SK-N-SH (cell line): ENCODE measurements at regions of chr3 and their contacts with region 1.

Region 1: GRCh38 chr3:155352900-155353490 is 59.5 kb upstream of the STRIT1 start:
- DNase-seq: peak; percentile 31
- H3K4me3 ChIP-seq: no peak overlapping the region
- H3K27ac ChIP-seq: no peak overlapping the region; a peak in 1 of 4 replicates
- H3K4me1 ChIP-seq: no peaks in the 10 kb centered on the region; a peak in 1 of 4 replicates
- H3K27me3 ChIP-seq: no peaks in the 10 kb centered on the region
- CTCF ChIP-seq: peak; percentile 71
- EP300 ChIP-seq: no peak
- RAD21 ChIP-seq: peak; percentile 76

Region 2: GRCh38 chr3:154981664-154982063 is 371.3 kb before region 1 on chr3:
- CTCF ChIA-PET with region 1: no interaction called
- POLR2A ChIA-PET with region 1: no interaction called
- DNase-seq: no peak
- H3K4me3 ChIP-seq: no peak overlapping the region
- H3K27ac ChIP-seq: no peak overlapping the region
- H3K4me1 ChIP-seq: no peaks in the 10 kb centered on the region
- H3K27me3 ChIP-seq: no peaks in the 10 kb centered on the region
- CTCF ChIP-seq: no peak
- EP300 ChIP-seq: no peak
- RAD21 ChIP-seq: no peak

Region 3: DNA sequence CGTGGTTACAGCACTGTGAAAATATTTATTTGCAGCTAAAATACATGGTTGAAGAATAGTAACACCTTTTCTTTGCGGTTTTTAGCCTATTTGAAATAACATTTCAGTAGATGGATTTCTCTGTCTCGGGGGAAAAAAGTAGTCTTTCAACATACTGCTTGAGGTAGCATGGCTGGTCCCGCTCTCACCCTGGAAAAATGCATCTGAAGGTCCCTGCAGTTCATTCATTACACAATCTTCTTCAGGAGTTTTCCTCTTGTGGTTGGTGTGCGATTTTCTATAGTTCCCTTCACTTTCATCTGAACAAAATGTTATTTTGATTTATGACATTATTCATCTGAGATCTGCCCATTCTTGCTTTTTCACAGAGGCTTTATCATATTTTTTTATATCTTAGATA is 135.4 kb before region 1 on chr3:
- CTCF ChIA-PET with region 1: no interaction called
- POLR2A ChIA-PET with region 1: no interaction called
- DNase-seq: no peak
- H3K4me3 ChIP-seq: no peak overlapping the region
- H3K27ac ChIP-seq: no peak overlapping the region
- H3K4me1 ChIP-seq: no peaks in the 10 kb centered on the region
- H3K27me3 ChIP-seq: no peaks in the 10 kb centered on the region
- CTCF ChIP-seq: no peak
- EP300 ChIP-seq: no peak
- RAD21 ChIP-seq: no peak

Region 4: GRCh38 chr3:155270485-155271342 is 82.3 kb before region 1 on chr3:
- CTCF ChIA-PET with region 1: no interaction called
- POLR2A ChIA-PET with region 1: no interaction called
- DNase-seq: no peak
- H3K4me3 ChIP-seq: no peak overlapping the region
- H3K27ac ChIP-seq: no peak overlapping the region
- H3K4me1 ChIP-seq: no peaks in the 10 kb centered on the region
- H3K27me3 ChIP-seq: no peaks in the 10 kb centered on the region
- CTCF ChIP-seq: no peak
- EP300 ChIP-seq: no peak
- RAD21 ChIP-seq: no peak

Region 5: GRCh38 chr3:155342344-155342743 is 10.7 kb before region 1 on chr3:
- CTCF ChIA-PET with region 1: interaction called, 10 read pairs
- POLR2A ChIA-PET with region 1: no interaction called
- DNase-seq: no peak
- H3K4me3 ChIP-seq: no peak overlapping the region
- H3K27ac ChIP-seq: no peak overlapping the region
- H3K4me1 ChIP-seq: peaks cover 0 to 4% of the 10 kb centered on the region in 2 experiments; a peak in 2 of 4 replicates
- H3K27me3 ChIP-seq: no peaks in the 10 kb centered on the region
- CTCF ChIP-seq: no peak
- EP300 ChIP-seq: no peak
- RAD21 ChIP-seq: no peak

Region 6: GRCh38 chr3:155519078-155519477 is 166.1 kb after region 1 on chr3:
- CTCF ChIA-PET with region 1: no interaction called
- POLR2A ChIA-PET with region 1: no interaction called
- DNase-seq: no peak
- H3K4me3 ChIP-seq: no peak overlapping the region
- H3K27ac ChIP-seq: no peak overlapping the region
- H3K4me1 ChIP-seq: peaks cover 0 to 2% of the 10 kb centered on the region in 2 experiments; a peak in 1 of 4 replicates
- H3K27me3 ChIP-seq: no peaks in the 10 kb centered on the region
- CTCF ChIP-seq: no peak
- EP300 ChIP-seq: no peak
- RAD21 ChIP-seq: no peak

Region 7: GRCh38 chr3:155712008-155712407 is 359.0 kb after region 1 on chr3:
- CTCF ChIA-PET with region 1: interaction called, 11 read pairs
- POLR2A ChIA-PET with region 1: no interaction called
- DNase-seq: no peak
- H3K4me3 ChIP-seq: no peak overlapping the region
- H3K27ac ChIP-seq: no peak overlapping the region
- H3K4me1 ChIP-seq: no peaks in the 10 kb centered on the region; a peak in 1 of 4 replicates
- H3K27me3 ChIP-seq: no peaks in the 10 kb centered on the region
- CTCF ChIP-seq: no peak
- EP300 ChIP-seq: no peak
- RAD21 ChIP-seq: no peak